Pancreas (tissue), 10 donors: ENCODE measurements at regions of chrX and their contacts with region 1.

Region 1: GRCh38 chrX:102950908-102951866 is 14.1 kb downstream of the RAB40AL start:
- DNase-seq: peak in 4 of 6 donors; percentile 15 to 66 (median 45)
- ATAC-seq: peak; percentile 79 to 93 (median 90)
- H3K4me3 ChIP-seq: peak overlapping the region in 2 of 4 donors; percentile 10 to 26
- H3K27ac ChIP-seq: no peak overlapping the region
- H3K4me1 ChIP-seq: no peaks in the 10 kb centered on the region
- H3K27me3 ChIP-seq: no peaks in the 10 kb centered on the region
- CTCF ChIP-seq: peak; percentile 43 to 56 (median 52)

Region 2: DNA sequence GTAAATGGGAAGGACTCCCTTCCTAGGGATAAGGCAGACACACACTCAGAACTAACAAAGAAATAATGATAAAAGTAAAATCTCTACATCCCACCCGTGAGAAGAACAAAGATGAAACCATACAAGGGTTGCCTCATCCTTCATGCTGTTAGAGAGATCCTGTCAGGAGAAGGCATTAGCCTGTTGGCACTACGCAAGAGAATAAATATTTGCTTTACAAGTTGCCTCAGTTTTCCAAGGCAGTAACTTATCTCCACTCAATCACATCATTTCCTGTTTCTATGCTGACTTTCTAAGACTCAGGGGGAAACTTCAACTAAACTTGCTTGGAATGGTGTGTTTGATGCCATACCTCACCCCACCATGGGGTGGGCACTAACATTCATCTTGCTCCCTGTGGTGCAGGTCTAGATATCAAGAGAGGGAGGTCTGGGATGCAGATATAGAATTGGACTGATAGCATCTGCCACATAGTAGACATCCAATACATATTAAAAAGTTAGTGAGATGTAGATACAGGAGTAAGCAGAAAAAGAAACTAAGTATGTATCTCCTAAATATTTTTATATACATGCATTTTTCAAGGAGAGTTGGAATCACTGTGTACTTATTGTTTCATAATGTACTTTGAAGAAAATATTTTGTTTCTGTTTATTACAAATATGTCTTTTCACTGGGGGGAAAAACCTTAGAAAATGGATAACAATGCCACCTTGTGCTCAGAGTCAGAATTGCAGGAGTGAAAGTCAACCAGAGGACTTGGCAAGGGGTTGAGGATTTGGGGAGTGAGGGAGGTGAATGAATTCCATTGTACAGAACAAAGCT is 206.5 kb after region 1 on chrX:
- intact Hi-C with region 1: no loop called
- DNase-seq: peak in 3 of 6 donors; percentile 18 to 49 (median 19)
- ATAC-seq: peak; percentile 63 to 87 (median 82)
- H3K4me3 ChIP-seq: no peak overlapping the region
- H3K27ac ChIP-seq: no peak overlapping the region
- H3K4me1 ChIP-seq: peaks cover 0 to 8% (median 0%) of the 10 kb centered on the region in 3 donors
- H3K27me3 ChIP-seq: peaks cover 0 to 7% (median 0%) of the 10 kb centered on the region in 4 donors
- CTCF ChIP-seq: peak; percentile 27 to 63 (median 54)

Region 3: DNA sequence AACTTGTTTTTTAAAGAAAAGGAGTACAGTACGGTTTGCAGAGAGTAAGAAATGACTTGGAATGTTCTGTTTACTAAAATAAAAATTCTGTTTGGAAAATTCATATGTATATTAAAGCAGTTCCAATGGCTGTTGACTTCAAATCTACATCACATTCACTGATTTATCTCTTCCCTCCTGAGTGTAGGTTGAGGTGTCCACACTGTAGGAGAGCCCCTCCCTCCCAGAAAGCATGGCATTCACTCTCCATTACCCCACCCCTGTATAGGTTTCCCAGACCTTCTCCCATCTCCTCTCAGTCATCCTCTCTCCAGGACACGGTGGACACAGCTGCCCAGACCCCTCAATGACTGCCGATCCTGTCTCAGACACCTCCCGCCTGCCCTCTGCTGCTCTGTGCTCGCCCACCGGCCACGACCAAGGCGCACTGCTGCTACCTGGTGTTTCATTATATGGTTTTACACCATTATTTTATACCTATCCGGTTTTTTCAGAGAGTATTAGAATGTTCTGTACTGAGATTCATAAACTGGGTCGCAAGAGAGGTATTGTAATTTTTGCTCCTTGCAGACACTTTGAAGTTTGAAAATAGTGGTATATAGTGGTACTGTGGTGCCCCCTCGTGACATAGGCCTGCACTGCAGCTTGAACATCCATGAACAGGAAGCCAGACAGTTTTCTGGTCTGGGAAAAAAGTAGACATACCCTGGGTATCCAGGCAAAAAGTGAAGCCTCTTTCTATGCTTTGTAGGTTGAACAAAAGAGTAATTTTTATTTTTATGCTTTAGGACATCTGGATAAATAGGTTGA is 225.0 kb after region 1 on chrX:
- intact Hi-C with region 1: loop called in 2 of 3 experiments (anchors 10 kb)
- DNase-seq: peak; percentile 24 to 87 (median 69)
- ATAC-seq: peak; percentile 72 to 96 (median 92)
- H3K4me3 ChIP-seq: no peak overlapping the region
- H3K27ac ChIP-seq: no peak overlapping the region
- H3K4me1 ChIP-seq: no peaks in the 10 kb centered on the region
- H3K27me3 ChIP-seq: peaks cover 0 to 21% (median 3%) of the 10 kb centered on the region in 4 donors
- CTCF ChIP-seq: peak; percentile 62 to 78 (median 64)

Region 4: GRCh38 chrX:103730796-103731493 is 779.8 kb after region 1 on chrX:
- intact Hi-C with region 1: no loop called
- DNase-seq: no peak
- ATAC-seq: no peak
- H3K4me3 ChIP-seq: no peak overlapping the region
- H3K27ac ChIP-seq: no peak overlapping the region
- H3K4me1 ChIP-seq: no peaks in the 10 kb centered on the region
- H3K27me3 ChIP-seq: peaks cover 0 to 15% (median 1%) of the 10 kb centered on the region in 4 donors
- CTCF ChIP-seq: no peak